ENCODE measurements at regions of chr17 and their contacts with region 1.

Region 1: GRCh38 chr17:68457539-68458259 is 403 bp upstream of the WIPI1 start:
- DNase-seq: peak; percentile 99
- H3K4me3 ChIP-seq: peak overlapping the region; percentile 37 to 88 (median 84)
- H3K27ac ChIP-seq: peak overlapping the region; percentile 96 to 98 (median 97)
- H3K4me1 ChIP-seq: peaks cover 0 to 23% (median 17%) of the 10 kb centered on the region in 4 donors
- H3K27me3 ChIP-seq: no peaks in the 10 kb centered on the region
- CTCF ChIP-seq: no peak
- EP300 ChIP-seq: peak in 2 of 4 donors; percentile 26 to 83
- POLR2A ChIP-seq: peak; percentile 66 to 81

Region 2: GRCh38 chr17:68205251-68205807 is 252.4 kb before region 1 on chr17:
- intact Hi-C with region 1: loop called (anchors 5 kb)
- DNase-seq: peak; percentile 94
- H3K4me3 ChIP-seq: peak overlapping the region; percentile 66 to 96 (median 80)
- H3K27ac ChIP-seq: peak overlapping the region; percentile 88 to 89 (median 88)
- H3K4me1 ChIP-seq: peaks cover 0 to 30% (median 17%) of the 10 kb centered on the region in 4 donors
- H3K27me3 ChIP-seq: peaks cover 3 to 19% (median 16%) of the 10 kb centered on the region in 3 donors
- CTCF ChIP-seq: peak; percentile 44 to 96 (median 58)
- EP300 ChIP-seq: no peak
- POLR2A ChIP-seq: peak; percentile 28 to 53

Region 3: DNA sequence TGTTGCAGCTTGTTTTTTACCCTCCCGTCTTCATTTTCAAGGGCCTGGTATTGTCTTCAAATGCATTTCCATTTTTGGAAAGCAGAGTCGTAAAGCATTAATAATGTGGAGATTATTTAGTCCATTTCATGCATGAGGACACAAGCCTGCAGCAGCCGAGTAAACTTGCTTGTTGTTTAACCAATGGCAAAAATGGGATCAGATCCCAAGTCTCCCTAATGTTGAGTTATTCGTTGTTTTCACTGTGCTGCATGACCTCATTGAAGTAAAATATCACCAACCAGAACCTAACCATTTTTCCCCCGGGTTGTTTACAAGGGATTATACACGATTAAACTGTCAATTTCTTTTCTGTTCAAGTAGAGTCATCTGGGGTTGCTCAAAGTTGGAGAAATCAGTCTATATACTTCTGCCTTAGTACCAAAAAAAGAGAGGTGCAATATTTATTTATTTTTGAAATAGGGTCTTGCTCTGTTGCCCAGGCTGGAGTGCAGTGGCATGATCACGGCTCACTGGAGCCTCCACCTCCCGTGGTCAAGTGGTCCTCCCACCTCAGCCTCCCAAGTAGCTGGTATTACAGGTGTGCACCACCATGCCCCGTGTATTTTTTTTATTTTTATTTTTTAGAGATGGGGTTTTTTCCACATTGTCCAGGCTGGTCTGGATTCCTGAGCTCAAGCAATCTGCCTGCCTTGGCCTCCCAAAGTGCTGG is 197.5 kb before region 1 on chr17:
- intact Hi-C with region 1: loop called (anchors 2 kb)
- DNase-seq: no peak
- H3K4me3 ChIP-seq: no peak overlapping the region
- H3K27ac ChIP-seq: no peak overlapping the region
- H3K4me1 ChIP-seq: peaks cover 0 to 19% (median 5%) of the 10 kb centered on the region in 4 donors
- H3K27me3 ChIP-seq: no peaks in the 10 kb centered on the region
- CTCF ChIP-seq: no peak
- EP300 ChIP-seq: no peak
- POLR2A ChIP-seq: no peak

Region 4: DNA sequence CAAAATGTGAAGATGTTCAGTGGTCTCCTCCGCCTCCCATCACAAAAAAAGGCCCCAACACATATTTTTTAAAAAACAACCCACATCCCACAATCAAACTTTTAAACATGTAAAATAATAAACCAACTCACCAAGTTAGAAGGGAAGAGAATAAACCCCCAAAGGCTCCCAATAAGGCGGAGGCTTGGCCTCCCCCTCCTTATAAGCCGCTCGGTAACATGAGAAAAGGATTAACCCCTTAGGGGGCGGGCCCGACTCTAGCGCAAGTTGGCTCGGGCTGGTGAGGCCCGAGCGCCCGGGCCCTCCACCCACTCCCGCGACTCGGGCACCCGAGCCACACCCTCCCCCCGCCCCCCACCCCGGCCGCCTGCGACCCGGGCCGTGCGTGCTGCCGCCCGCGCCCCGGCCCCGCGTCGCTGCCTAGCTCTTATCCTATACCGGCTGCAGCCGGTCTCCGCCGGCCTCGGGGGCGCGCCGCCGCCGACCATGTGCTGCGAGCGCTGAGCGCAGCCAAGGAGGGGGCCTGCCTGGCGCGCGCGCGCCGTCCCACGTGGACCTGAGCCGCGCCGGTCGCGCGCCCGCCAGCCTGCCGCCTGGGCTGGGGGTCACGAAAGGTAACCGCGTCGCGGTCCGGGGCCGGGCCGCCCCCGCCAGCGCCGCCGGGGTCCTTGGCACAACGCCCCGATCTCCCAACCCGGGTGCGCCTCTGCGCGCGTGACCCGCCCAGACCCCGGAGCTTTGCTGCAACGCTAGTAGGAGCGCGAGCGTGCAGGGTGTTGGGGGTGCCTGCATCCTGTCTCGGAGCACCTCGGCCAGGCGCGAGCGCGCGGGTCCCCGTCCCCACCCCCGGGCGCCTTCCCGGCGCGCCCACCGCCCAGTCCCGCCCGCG is 166.5 kb before region 1 on chr17 and contains the starts of genes ARSG and SLC16A6:
- intact Hi-C with region 1: no loop called
- DNase-seq: no peak
- H3K4me3 ChIP-seq: peak within 1 kb of the TSS; percentile 22 to 63 (median 55)
- H3K27ac ChIP-seq: peak within 1 kb of the TSS; percentile 41 to 68 (median 56)
- H3K4me1 ChIP-seq: peaks cover 0 to 27% (median 23%) of the 10 kb centered on the region in 4 donors
- H3K27me3 ChIP-seq: peaks cover 12 to 67% (median 57%) of the 10 kb centered on the region in 3 donors
- CTCF ChIP-seq: no peak
- EP300 ChIP-seq: no peak
- POLR2A ChIP-seq: no peak
- total RNA-seq, gene ARSG: 1.5 to 3.0 (median 2.0) TPM
- total RNA-seq, gene SLC16A6: 0.14 TPM in 1 of 4 donors, not detected in the others

Region 5: DNA sequence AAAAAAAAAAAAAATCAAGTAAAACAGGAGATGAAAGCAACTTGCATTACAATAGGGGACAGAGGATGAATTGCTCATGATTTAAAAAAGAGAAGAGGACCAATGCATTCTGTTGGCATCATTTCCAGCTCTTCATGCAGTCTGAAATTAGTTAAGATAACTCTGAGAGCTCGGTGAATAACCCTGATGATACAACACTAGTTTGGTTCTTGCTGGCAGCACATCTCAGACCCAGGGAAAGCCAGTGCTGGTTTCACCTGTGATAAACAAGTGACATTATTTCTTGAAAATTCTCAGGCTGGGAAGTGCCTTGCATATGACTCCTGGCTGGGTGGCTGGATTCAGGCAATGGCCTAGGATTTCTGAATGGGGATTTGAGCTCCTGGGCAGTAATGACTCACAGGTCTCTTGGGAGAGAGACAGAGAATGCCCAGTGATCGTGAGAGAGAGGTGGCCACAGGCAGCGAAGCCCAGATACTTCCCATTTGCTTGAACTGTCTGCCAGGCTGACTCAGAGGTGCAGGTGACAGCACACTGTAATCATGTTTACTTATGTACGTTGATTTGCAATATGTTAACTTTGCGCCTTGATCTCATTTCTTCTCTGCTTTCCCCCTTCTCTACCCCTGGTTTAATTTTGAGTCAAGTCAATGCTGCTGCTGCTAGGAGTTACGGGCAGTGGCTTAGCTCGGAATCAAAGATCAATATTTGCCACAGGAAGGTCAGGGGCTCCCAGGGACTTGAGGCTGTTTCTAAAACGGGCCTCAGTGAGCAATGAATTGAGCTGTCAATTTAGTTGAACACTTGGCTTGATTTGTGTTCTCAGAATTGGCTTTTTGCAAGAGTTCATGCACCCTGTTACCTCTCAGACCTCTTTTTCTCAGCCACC is 139.4 kb before region 1 on chr17:
- intact Hi-C with region 1: no loop called
- DNase-seq: no peak
- H3K4me3 ChIP-seq: no peak overlapping the region
- H3K27ac ChIP-seq: no peak overlapping the region
- H3K4me1 ChIP-seq: no peaks in the 10 kb centered on the region
- H3K27me3 ChIP-seq: no peaks in the 10 kb centered on the region
- CTCF ChIP-seq: no peak
- EP300 ChIP-seq: no peak
- POLR2A ChIP-seq: no peak

Region 6: GRCh38 chr17:68359791-68360535 is 97.7 kb before region 1 on chr17:
- intact Hi-C with region 1: no loop called
- DNase-seq: no peak
- H3K4me3 ChIP-seq: no peak overlapping the region
- H3K27ac ChIP-seq: no peak overlapping the region
- H3K4me1 ChIP-seq: no peaks in the 10 kb centered on the region
- H3K27me3 ChIP-seq: no peaks in the 10 kb centered on the region
- CTCF ChIP-seq: no peak
- EP300 ChIP-seq: no peak
- POLR2A ChIP-seq: no peak

Region 7: GRCh38 chr17:68512247-68512982 is 54.7 kb after region 1 on chr17 and contains the start of gene PRKAR1A:
- intact Hi-C with region 1: loop called (anchors 5 kb)
- DNase-seq: peak; percentile 98
- H3K4me3 ChIP-seq: peak within 1 kb of the TSS; percentile 72 to 95 (median 88)
- H3K27ac ChIP-seq: peak within 1 kb of the TSS; percentile 97 to 99 (median 98)
- H3K4me1 ChIP-seq: peaks cover 0 to 32% (median 27%) of the 10 kb centered on the region in 4 donors
- H3K27me3 ChIP-seq: no peaks in the 10 kb centered on the region
- CTCF ChIP-seq: no peak
- EP300 ChIP-seq: peak in 2 of 4 donors; percentile 7 to 58
- POLR2A ChIP-seq: peak; percentile 74 to 84
- total RNA-seq, gene PRKAR1A: 206 to 268 (median 230) TPM

Region 8: GRCh38 chr17:68719431-68719830 is 261.7 kb after region 1 on chr17:
- intact Hi-C with region 1: no loop called
- DNase-seq: no peak
- H3K4me3 ChIP-seq: no peak overlapping the region
- H3K27ac ChIP-seq: no peak overlapping the region
- H3K4me1 ChIP-seq: no peaks in the 10 kb centered on the region
- H3K27me3 ChIP-seq: no peaks in the 10 kb centered on the region
- CTCF ChIP-seq: no peak
- EP300 ChIP-seq: no peak
- POLR2A ChIP-seq: no peak

Measured in sigmoid colon (tissue), 7 donors.